Activated T-helper 1 cell treated with anti-CD3 and anti-CD28 coated beads, Interleukin-12 subunit alpha, Interleukin-12 subunit beta, Interleukin-2, Interleukin-4 antibody, amounts not matched to agents 30 ng/mL and 10 ng/mL and 1 ng/mL, durations not matched to agents 14 hours and 24 hours and 36 hours (primary cell): ENCODE measurements at regions of chr19 and their contacts with region 1.

Region 1: GRCh38 chr19:45792470-45793177 is at the start of gene DMWD:
- DNase-seq: peak; percentile 99
- H3K4me3 Mint-ChIP-seq: peak within 1 kb of the TSS; percentile 89
- H3K27ac Mint-ChIP-seq: peak within 1 kb of the TSS; percentile 95
- H3K4me1 Mint-ChIP-seq: peaks cover 30% of the 10 kb centered on the region
- H3K27me3 Mint-ChIP-seq: peaks cover 52% of the 10 kb centered on the region
- total RNA-seq, gene DMWD: 50.0 and 55.8 TPM in 2 replicates

Region 2: GRCh38 chr19:45717166-45717982 is 75.2 kb before region 1 on chr19:
- intact Hi-C with region 1: loop called (anchors 1 kb)
- DNase-seq: peak; percentile 99
- H3K4me3 Mint-ChIP-seq: peak overlapping the region; percentile 96
- H3K27ac Mint-ChIP-seq: peak overlapping the region; percentile 96
- H3K4me1 Mint-ChIP-seq: peaks cover 40% of the 10 kb centered on the region
- H3K27me3 Mint-ChIP-seq: no peaks in the 10 kb centered on the region

Region 3: DNA sequence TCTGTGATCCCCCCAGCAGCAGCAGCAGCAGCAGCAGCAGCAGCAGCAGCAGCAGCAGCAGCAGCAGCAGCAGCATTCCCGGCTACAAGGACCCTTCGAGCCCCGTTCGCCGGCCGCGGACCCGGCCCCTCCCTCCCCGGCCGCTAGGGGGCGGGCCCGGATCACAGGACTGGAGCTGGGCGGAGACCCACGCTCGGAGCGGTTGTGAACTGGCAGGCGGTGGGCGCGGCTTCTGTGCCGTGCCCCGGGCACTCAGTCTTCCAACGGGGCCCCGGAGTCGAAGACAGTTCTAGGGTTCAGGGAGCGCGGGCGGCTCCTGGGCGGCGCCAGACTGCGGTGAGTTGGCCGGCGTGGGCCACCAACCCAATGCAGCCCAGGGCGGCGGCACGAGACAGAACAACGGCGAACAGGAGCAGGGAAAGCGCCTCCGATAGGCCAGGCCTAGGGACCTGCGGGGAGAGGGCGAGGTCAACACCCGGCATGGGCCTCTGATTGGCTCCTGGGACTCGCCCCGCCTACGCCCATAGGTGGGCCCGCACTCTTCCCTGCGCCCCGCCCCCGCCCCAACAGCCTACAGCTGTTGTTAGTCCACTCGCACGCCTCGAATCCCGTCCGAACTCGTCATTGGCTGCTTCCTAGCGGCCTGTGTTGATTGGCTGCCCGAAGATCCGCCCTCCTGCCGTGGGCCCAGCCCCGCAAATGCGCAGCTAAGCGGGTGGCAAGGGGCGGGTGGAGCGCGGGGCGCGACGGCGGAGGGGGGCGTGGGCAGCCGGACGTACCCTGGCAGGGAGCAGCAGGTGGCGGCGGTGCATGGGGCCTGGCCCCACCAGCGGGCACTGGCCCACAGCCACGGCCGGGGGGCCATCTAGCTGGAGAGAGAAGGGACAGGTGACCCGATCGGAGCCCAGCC is 22.2 kb before region 1 on chr19:
- intact Hi-C with region 1: loop called (anchors 1 kb)
- DNase-seq: peak; percentile 85
- H3K4me3 Mint-ChIP-seq: peak overlapping the region; percentile 88
- H3K27ac Mint-ChIP-seq: no peak overlapping the region
- H3K4me1 Mint-ChIP-seq: peaks cover 9% of the 10 kb centered on the region
- H3K27me3 Mint-ChIP-seq: peaks cover 20% of the 10 kb centered on the region

Region 4: DNA sequence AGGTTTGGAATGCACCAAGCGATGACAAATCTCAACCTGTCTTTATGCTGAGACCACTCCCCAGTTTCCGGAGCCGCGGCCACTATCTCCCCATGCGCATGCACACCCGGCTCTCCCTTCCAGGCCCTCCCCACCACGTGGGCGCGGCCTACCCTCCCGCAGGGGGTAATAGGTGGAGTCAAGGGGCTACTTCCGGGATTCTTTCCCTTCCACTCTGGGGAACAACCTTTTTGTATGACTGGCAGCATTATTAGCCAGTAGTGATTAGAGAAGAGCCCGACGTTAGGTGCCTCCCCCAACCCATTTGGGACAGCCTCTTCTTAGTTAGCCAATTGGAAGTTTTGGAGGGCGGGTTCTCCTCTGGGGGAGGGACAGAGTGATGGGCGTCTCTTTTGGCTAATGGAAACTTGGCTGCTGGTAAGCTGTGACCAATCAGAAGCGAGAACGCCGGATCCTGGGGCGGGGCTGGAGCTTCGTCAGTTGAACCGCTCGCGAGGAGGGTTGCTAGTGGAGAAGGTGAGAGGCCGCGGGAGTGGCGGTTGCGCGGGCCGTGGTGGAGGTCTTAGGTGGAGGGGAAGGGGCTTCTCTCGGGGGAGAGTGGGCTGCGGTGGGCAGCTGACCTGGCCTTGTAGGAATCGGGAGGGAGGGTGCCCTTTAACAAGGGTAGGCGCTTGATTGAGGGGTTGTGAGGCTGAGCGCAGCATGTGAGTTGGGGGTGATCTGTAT is 202.5 kb after region 1 on chr19 and contains the start of gene CCDC61:
- intact Hi-C with region 1: loop called (anchors 1 kb)
- DNase-seq: peak; percentile 96
- H3K4me3 Mint-ChIP-seq: no peak within 1 kb of the TSS
- H3K27ac Mint-ChIP-seq: no peak within 1 kb of the TSS
- H3K4me1 Mint-ChIP-seq: peaks cover 17% of the 10 kb centered on the region
- H3K27me3 Mint-ChIP-seq: peaks cover 4% of the 10 kb centered on the region
- total RNA-seq, gene CCDC61: 24.0 and 24.1 TPM in 2 replicates